Astrocyte of the cerebellum (primary cell): ENCODE measurements at regions of chr2 and their contacts with region 1.

Region 1: DNA sequence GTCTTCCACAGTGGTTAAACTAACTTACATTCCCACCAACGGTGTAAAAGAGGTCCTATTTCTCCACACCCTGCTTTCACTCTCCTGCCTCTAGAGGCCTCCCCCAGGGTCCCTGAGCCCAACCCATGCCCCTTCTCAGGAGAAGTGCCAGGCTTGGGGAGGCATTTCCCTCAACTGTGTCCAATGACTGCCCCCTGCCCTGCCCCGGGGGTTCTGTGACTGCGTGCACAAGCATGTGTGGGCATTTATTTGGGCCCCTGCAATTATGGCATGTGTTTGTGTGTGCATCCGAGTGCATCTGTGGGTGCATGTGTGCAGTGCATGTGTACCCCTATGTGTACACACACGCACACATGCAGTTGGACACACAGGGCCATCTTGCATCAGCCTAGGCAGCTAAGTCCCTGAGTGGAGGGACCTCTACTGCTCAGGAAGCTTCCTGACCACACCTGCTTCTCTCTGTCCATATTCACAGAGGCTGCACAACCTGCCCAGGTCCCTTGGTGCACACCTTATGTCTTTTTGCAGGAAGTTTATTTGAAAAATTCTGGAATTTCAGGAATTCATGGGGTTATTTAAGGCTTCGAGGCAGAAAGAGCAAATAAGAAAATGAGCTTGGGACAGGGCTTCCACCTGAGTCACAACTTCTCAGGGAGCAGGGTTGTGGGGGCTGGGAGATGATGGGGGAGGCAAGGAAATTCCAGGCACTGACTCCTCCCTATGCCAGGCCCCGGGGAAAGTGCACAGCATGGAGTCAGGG is 57.5 kb downstream of the INHBB start:
- DNase-seq: no peak
- H3K4me3 ChIP-seq: no peak overlapping the region
- CTCF ChIP-seq: no peak

Region 2: GRCh38 chr2:120360307-120360855 is 43.1 kb before region 1 on chr2:
- in situ Hi-C with region 1: loop called (anchors 5 kb)
- DNase-seq: no peak
- H3K4me3 ChIP-seq: no peak overlapping the region
- CTCF ChIP-seq: no peak

Region 3: DNA sequence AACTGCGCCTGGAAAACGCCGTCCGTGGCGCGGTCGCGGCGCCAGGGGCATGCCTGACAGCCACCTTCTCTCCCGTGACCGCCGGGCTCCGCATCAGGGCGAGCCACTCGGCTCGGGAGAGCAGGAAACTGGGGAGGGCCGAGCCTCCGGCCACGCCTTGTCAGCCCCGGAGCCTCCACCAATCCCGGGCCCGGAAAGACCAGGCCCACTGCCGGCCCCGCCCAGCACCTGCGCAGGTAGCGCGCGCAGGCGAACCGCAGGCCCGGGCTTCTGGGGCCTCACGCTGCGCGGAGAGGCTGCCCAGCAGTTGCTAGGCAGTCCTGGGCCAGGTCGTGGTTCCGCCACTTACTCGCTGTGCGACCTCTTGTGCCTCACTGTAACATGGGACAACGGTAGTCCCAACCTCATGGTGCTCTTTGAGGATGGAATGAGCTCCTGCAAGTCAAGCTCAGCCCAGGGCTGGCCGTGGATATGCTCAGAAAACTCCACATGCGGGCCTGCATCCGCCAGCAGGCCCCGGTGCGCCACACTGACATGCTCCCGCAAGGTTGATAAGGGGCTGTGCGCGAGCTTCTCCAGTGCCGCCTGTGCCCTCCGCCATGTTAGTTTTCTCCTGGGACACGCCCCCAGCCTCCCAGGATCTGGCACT is 39.6 kb after region 1 on chr2:
- in situ Hi-C with region 1: no loop called
- DNase-seq: no peak
- H3K4me3 ChIP-seq: no peak overlapping the region
- CTCF ChIP-seq: no peak

Region 4: GRCh38 chr2:120470041-120470965 is 66.9 kb after region 1 on chr2:
- in situ Hi-C with region 1: loop called (anchors 5 kb)
- DNase-seq: peak; percentile 65
- H3K4me3 ChIP-seq: no peak overlapping the region
- CTCF ChIP-seq: no peak